ENCODE measurements at regions of chr11 and their contacts with region 1.

Region 1: DNA sequence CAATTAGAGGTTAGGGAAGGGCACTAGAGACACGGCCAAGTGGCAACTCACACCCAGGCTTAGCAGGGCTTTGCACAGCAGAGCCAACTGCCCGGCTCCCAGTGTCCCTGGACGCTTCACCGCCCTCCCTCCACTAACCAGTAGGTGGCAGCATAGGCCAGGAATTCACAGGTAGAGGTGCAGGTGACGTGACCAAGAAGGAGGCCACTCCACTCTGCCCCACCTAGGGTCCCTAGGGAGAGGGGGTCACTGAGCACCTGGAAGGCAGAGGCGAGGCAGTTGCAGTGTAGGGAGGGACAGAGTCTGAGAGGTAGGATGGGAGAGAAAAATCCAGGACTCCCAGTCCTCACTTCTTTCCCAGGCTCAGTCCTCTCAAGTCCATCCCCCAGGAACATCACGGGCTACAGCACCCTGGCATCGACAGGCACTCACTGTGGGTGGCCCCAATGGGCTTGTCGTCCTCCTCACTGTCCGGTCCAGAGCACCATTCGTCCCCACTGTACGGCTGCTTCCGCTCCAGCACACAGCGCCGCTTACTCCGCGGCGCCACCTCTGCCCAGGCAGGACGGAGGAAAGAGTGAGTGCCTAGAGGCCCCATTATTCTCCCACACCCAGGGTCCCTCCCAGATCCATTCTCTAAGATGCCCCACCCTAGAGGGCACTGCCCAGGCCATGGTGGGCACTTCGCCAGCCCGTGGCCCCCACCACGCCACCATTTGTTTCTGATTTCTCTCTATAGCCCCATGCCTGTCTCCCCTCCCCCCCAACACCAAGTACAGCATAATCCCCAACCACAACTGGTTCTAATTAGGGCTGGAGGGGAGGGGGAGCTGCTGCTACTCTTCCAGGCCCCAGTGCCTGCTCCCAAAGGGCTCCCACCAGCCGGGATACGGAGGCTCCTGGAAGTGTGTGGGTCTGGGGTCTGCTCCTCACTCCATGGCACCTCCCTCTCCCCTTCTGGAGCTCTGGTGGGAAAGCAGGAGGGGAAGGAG is 18.4 kb downstream of the BCL9L start:
- DNase-seq: peak; percentile 96
- ATAC-seq: peak; percentile 27
- H3K4me3 ChIP-seq: no peak overlapping the region
- H3K27ac ChIP-seq: no peak overlapping the region
- H3K4me1 ChIP-seq: peaks cover 43% of the 10 kb centered on the region
- H3K27me3 ChIP-seq: no peaks in the 10 kb centered on the region
- CTCF ChIP-seq: peak; percentile 98

Region 2: GRCh38 chr11:118956094-118956846 is 48.9 kb after region 1 on chr11 and contains the start of gene UPK2:
- CTCF ChIA-PET with region 1: no interaction called
- POLR2A ChIA-PET with region 1: no interaction called
- intact Hi-C with region 1: loop called (anchors 1 kb)
- DNase-seq: peak; percentile 97
- ATAC-seq: peak; percentile 99
- H3K4me3 ChIP-seq: no peak within 1 kb of the TSS
- H3K27ac ChIP-seq: no peak within 1 kb of the TSS
- H3K4me1 ChIP-seq: peaks cover 8% of the 10 kb centered on the region; the same call in 1 of the 2 replicates
- H3K27me3 ChIP-seq: no peaks in the 10 kb centered on the region
- CTCF ChIP-seq: peak; percentile 99
- total RNA-seq, gene UPK2: 0.44 TPM in 1 of 2 replicates, not detected in the other

Region 3: DNA sequence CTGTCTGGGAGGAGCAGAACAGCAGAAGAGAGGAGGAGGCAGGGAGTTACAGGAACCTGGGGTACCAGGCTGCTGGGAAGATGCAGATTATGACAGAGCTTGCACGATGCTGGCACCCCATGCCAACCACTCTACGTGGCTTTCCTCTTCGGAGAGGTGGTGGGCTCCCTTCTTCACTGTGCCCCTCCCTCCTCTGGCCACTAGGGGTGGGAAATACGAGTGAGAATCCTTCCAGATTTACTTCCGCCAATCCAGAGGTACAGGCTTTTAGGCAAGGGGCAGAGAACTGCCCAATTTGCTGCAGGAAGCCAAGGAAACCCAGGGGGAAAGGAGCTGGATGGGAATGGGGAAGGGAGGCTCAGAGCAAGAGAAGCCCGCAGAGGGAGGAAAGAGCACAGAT is 137.4 kb after region 1 on chr11:
- CTCF ChIA-PET with region 1: no interaction called
- POLR2A ChIA-PET with region 1: no interaction called
- intact Hi-C with region 1: no loop called
- DNase-seq: no peak
- ATAC-seq: no peak
- H3K4me3 ChIP-seq: no peak overlapping the region
- H3K27ac ChIP-seq: no peak overlapping the region
- H3K4me1 ChIP-seq: no peaks in the 10 kb centered on the region
- H3K27me3 ChIP-seq: no peaks in the 10 kb centered on the region
- CTCF ChIP-seq: no peak; the same call in 1 of the 2 replicates

Measured in PC-3 (cell line).